Left lung (tissue), 14 donors: ENCODE measurements at regions of chr1 and their contacts with region 1.

Region 1: DNA sequence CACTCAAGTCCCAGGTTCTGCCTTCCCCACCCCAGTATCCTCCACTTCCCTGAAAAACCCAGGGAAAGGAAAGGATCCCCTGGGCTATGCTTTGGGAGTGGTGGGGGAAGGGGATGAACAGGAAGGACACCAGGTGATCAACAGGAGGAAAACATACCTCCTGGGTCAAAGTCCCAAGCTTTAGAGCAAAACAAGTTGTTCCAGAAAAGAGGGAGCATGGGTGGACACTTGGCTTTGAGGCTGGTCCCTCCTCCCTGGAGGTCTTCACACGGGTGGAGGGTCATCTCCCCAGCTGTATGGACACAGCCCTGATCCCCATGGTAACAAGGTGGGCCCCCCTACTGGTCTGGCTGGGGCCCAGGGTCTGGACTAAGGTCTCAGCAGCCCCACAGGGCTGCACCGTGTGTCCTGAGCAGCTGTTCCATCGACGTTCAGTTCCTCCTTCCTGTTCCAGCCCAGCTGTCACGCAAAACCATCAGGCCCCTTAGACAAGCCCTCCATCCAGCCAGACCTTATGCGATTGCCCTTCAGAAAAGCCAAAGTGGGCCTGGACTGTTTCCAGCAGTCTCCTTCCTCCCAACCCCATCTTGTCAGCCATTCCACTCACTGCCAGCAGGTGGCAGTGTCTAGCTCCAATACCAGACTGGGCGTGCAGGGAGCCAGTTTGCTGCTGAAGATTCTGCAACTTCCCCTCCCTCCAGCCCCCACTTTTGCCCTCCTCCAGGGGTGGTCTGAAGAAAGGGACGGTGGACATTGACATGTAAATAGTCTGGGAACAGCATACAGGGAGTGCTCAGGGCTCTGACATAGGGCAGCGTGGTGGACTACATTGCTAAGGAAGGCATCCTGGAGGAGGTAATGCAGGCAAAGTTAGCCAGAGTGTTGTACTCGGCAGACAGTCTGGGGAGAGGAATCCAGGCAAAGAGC is 2.9 kb upstream of the PDZK1IP1 start:
- DNase-seq: peak in 3 of 4 donors; percentile 73 to 90 (median 79)
- ATAC-seq: peak; percentile 54
- H3K4me3 ChIP-seq: no peak overlapping the region
- H3K27ac ChIP-seq: no peak overlapping the region
- H3K4me1 ChIP-seq: peaks cover 0 to 29% of the 10 kb centered on the region in 2 donors
- H3K27me3 ChIP-seq: no peaks in the 10 kb centered on the region
- CTCF ChIP-seq: peak; percentile 92 to 97

Region 2: GRCh38 chr1:47262787-47263413 is 70.2 kb after region 1 on chr1:
- intact Hi-C with region 1: loop called in 1 of 2 experiments (anchors 5 kb)
- DNase-seq: peak in 2 of 4 donors; percentile 6 to 30
- ATAC-seq: peak; percentile 77
- H3K4me3 ChIP-seq: no peak overlapping the region
- H3K27ac ChIP-seq: no peak overlapping the region
- H3K4me1 ChIP-seq: no peaks in the 10 kb centered on the region
- H3K27me3 ChIP-seq: no peaks in the 10 kb centered on the region
- CTCF ChIP-seq: peak; percentile 61 to 64